ENCODE measurements at regions of chr17 and their contacts with region 1.

Region 1: GRCh38 chr17:43878260-43879175 is 28.8 kb downstream of the MPP2 start:
- DNase-seq: peak; percentile 78
- H3K4me3 Mint-ChIP-seq: no peak overlapping the region
- H3K27ac Mint-ChIP-seq: no peak overlapping the region
- H3K4me1 Mint-ChIP-seq: peaks cover 6% of the 10 kb centered on the region
- H3K27me3 Mint-ChIP-seq: peaks cover 25% of the 10 kb centered on the region
- CTCF ChIP-seq: peak; percentile 86

Region 2: GRCh38 chr17:43861024-43861621 is 17.4 kb before region 1 on chr17:
- CTCF ChIA-PET with region 1: interaction called, 20 read pairs
- POLR2A ChIA-PET with region 1: no interaction called
- intact Hi-C with region 1: no loop called
- DNase-seq: no peak
- H3K4me3 Mint-ChIP-seq: no peak overlapping the region
- H3K27ac Mint-ChIP-seq: no peak overlapping the region
- H3K4me1 Mint-ChIP-seq: no peaks in the 10 kb centered on the region
- H3K27me3 Mint-ChIP-seq: peaks cover 27% of the 10 kb centered on the region
- CTCF ChIP-seq: no peak

Region 3: GRCh38 chr17:43900183-43900857 is 21.8 kb after region 1 on chr17:
- CTCF ChIA-PET with region 1: interaction called, 87 read pairs
- POLR2A ChIA-PET with region 1: no interaction called
- intact Hi-C with region 1: no loop called
- DNase-seq: peak; percentile 81
- H3K4me3 Mint-ChIP-seq: peak overlapping the region; percentile 69
- H3K27ac Mint-ChIP-seq: no peak overlapping the region
- H3K4me1 Mint-ChIP-seq: peaks cover 6% of the 10 kb centered on the region
- H3K27me3 Mint-ChIP-seq: peaks cover 41% of the 10 kb centered on the region
- CTCF ChIP-seq: no peak

Region 4: GRCh38 chr17:43940630-43941029 is 62.1 kb after region 1 on chr17:
- CTCF ChIA-PET with region 1: interaction called, 32 read pairs
- POLR2A ChIA-PET with region 1: interaction called, 3 read pairs
- intact Hi-C with region 1: loop called (anchors 1 kb)
- DNase-seq: peak; percentile 45
- H3K4me3 Mint-ChIP-seq: no peak overlapping the region
- H3K27ac Mint-ChIP-seq: no peak overlapping the region
- H3K4me1 Mint-ChIP-seq: peaks cover 6% of the 10 kb centered on the region
- H3K27me3 Mint-ChIP-seq: peaks cover 21% of the 10 kb centered on the region
- CTCF ChIP-seq: peak; percentile 41

Region 5: DNA sequence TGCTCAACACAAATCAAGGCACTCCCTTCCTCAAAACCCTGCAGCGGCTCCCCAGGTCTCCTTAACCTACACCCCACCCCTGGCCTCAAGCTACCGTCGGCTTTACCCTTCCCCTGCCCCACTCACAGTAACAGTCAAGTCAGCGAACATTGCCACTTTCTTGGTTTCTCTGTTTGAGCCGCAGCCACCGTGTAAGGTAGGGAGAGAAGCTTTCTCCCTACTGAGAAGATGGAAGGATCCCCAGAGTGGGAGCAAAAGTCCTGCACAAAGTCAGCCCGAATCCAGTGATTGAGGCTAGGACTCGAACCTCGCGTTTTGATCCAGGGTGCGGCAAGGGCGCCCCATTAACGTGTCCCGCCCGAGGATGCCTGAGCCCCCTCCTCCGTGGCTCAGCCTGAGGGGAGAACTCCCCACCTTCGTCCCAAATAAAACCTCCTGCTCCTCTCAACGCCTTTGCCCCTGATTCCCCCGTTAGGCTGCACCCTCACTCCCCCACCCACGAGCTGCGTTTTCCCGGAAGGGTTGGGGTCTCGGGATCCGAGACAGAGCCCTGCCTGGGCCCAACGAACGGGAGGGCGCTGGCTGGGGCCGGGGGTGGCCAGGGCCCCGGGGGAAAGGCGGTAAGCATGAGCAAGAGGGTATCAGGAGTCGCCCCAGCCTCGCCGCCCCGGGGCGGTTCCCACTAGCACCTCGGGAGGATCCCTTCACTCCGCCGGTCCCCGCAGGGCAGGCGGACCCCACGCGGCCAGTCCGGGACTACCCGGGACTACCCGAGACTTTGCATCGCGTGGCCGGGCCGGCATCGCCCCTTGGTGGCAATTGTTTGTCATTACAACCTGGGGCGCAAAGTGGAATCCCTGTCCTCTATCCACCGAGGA is 116.0 kb after region 1 on chr17:
- CTCF ChIA-PET with region 1: interaction called, 49 read pairs
- POLR2A ChIA-PET with region 1: interaction called, 3 read pairs
- intact Hi-C with region 1: loop called (anchors 1 kb)
- DNase-seq: peak; percentile 69
- H3K4me3 Mint-ChIP-seq: peak overlapping the region; percentile 64
- H3K27ac Mint-ChIP-seq: no peak overlapping the region
- H3K4me1 Mint-ChIP-seq: peaks cover 8% of the 10 kb centered on the region
- H3K27me3 Mint-ChIP-seq: no peaks in the 10 kb centered on the region
- CTCF ChIP-seq: peak; percentile 95

Region 6: DNA sequence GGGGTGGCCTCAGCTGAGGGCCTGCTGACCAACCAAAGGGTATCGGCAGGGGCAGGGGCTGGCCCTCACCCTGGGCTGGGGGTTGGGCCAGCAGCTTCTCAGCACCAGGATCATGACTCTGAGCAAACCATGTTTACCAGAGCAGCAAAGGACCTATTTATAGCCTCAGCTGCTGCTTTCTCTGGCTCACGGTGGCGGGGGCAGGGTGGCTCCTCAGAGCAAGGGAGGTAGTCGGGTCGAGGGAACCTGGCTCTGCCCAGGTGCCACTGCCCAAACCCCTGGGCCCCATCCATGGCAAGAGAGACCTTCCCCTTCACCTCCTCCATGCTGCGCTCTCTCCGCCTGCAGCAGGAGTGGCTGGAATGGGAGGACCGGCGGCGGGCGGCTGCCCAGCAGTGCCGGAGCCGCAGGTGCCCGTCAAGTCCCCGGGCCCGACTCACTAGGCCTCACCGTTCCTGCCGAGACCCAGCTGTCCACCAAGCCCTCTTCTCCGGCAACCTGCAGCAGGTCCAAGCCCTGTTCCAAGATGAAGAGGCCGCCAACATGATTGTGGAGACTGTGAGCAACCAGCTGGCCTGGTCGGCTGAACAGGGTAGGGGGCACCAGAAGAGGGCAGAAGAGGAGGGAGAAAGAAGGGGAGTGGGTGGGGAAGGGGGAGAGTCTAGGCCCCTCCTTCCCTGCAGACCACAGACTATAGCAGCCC is 292.1 kb after region 1 on chr17 and contains the start of gene ASB16:
- CTCF ChIA-PET with region 1: interaction called, 4 read pairs
- POLR2A ChIA-PET with region 1: no interaction called
- intact Hi-C with region 1: loop called (anchors 5 kb)
- DNase-seq: no peak
- H3K4me3 Mint-ChIP-seq: no peak within 1 kb of the TSS
- H3K27ac Mint-ChIP-seq: no peak within 1 kb of the TSS
- H3K4me1 Mint-ChIP-seq: peaks cover 11% of the 10 kb centered on the region
- H3K27me3 Mint-ChIP-seq: no peaks in the 10 kb centered on the region
- CTCF ChIP-seq: no peak
- total RNA-seq, gene ASB16: not detected in 2 replicates